PC-3 (cell line): ENCODE measurements at regions of chr1 and their contacts with region 1.

Region 1: DNA sequence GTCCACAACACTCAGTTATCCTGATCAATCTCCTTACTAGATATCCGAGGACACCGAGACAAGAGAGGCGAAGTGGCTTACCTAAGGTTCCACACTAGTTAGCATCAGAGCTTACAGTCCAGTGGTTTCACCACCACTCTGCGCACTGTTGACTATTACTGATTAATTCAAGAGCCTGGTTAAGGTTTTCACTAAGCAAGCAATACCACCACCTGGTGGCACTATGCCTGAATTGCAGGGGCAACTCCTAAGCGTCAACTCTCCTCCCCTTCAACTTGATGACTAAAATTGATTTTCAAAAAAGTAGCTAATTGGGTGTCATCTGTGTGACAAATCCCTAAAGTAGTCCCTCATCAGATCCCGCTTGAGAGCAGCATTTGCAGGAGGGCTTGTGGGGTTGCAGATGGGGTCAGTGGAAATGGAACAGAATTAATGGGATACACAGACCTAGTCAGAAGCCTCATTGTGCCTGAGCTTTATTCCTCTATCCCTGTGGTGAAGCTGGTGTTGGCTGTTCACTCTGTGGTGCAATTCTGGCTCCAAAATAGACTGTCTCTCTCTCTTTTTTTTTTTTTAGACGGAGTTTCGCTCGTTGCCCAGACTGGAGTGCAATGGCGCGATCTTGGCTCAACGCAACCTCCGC is 9.1 kb downstream of the TTC22 start:
- DNase-seq: peak; percentile 83
- ATAC-seq: no peak
- H3K4me3 ChIP-seq: no peak overlapping the region
- H3K27ac ChIP-seq: no peak overlapping the region
- H3K4me1 ChIP-seq: peaks cover 35% of the 10 kb centered on the region
- H3K27me3 ChIP-seq: no peaks in the 10 kb centered on the region
- CTCF ChIP-seq: peak; percentile 93

Region 2: GRCh38 chr1:54671985-54672608 is 119.9 kb before region 1 on chr1:
- CTCF ChIA-PET with region 1: no interaction called
- POLR2A ChIA-PET with region 1: no interaction called
- intact Hi-C with region 1: loop called (anchors 1 kb)
- DNase-seq: peak; percentile 76
- ATAC-seq: peak; percentile 85
- H3K4me3 ChIP-seq: no peak overlapping the region
- H3K27ac ChIP-seq: no peak overlapping the region
- H3K4me1 ChIP-seq: no peaks in the 10 kb centered on the region
- H3K27me3 ChIP-seq: 0 out of 2 replicates have a peak, but pooled peaks cover under 1% of the 10 kb centered on the region
- CTCF ChIP-seq: peak; percentile 89